B cell (primary cell): ENCODE measurements at regions of chr14 and their contacts with region 1.

Region 1: DNA sequence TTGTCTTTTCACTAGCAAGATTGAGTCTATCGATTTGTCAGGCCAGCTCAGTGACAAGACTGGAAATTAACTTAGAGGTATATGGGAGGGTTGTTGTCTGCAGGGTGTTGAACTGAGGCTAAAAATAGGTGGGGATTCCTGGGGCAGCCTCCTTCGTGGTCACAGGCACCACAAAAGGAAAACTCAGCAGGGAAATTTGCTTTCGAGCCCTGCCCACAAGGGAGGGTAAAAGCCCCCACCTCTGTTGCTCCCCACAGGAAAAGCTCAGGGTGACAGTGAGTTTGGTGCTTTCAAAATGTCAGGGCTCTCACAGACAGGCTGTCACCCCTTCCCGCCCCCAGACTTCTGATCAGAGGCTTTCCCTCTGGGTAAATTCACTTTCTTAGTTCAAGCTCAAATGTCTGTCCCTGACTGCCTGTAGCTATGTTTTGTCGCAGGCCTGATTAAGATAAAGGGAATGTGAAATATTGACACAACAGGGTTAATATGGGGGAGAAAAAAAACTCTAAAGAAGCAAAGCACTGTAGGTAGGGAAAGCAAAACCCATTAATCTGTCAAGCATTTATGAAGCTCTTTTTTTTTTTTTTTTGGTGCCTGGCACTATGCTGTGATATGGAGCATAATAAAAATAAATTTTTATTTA is 11.7 kb upstream of the NFKBIA start:
- DNase-seq: peak; percentile 39
- ATAC-seq: peak; percentile 32
- H3K4me3 ChIP-seq: no peak overlapping the region
- H3K4me3 Mint-ChIP-seq: peak overlapping the region; percentile 44
- H3K27ac ChIP-seq: no peak overlapping the region
- H3K27ac Mint-ChIP-seq: peak overlapping the region; percentile 15
- H3K4me1 ChIP-seq: peaks cover 8 to 26% of the 10 kb centered on the region in 2 donors
- H3K4me1 Mint-ChIP-seq: peaks cover 25% of the 10 kb centered on the region
- H3K27me3 ChIP-seq: no peaks in the 10 kb centered on the region
- H3K27me3 Mint-ChIP-seq: no peaks in the 10 kb centered on the region
- CTCF ChIP-seq: no peak

Region 2: GRCh38 chr14:34671716-34672115 is 744.5 kb before region 1 on chr14:
- CTCF ChIA-PET with region 1: interaction called, 8 read pairs
- POLR2A ChIA-PET with region 1: no interaction called
- intact Hi-C with region 1: loop called (anchors 1 kb)
- DNase-seq: no peak
- ATAC-seq: no peak
- H3K4me3 ChIP-seq: no peak overlapping the region
- H3K4me3 Mint-ChIP-seq: no peak overlapping the region
- H3K27ac ChIP-seq: no peak overlapping the region
- H3K27ac Mint-ChIP-seq: no peak overlapping the region
- H3K4me1 ChIP-seq: no peaks in the 10 kb centered on the region
- H3K4me1 Mint-ChIP-seq: no peaks in the 10 kb centered on the region
- H3K27me3 ChIP-seq: no peaks in the 10 kb centered on the region
- H3K27me3 Mint-ChIP-seq: no peaks in the 10 kb centered on the region
- CTCF ChIP-seq: no peak

Region 3: DNA sequence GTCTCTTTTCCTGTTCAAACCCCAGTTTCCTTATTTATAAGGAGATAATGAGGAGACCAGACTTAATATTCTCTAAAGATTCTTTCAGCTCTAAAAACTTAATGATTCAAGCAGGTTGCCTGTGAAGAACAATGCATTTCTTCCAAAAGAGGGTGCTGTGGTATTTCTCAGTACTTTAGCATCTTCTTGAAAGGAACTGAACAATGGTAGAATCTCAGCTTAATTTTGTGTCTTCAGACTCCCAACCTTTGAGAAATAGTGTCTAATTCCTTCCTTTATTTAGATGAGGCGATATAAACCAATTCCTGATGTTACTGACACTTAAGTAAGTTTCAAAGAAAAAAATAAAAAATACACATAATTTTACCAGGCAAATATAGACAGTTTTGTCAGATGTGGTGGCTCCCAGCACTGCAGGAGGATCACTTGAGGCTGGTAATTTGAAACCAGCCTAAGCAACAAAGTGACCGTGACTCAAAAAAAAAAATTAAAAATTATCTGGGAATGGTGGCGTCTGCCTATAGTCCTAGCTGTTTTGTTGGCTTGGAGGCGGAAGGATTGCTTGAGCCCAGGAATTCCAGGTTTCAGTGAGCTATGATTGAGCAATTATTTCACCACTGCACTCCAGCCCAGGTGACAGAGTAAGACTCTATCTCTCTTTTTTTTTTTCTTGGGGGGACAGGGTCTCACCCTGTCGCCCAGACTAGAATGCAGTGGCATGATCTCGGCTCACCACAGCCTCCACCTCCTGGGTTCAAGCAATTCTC is 200.9 kb before region 1 on chr14:
- CTCF ChIA-PET with region 1: interaction called, 35 read pairs
- POLR2A ChIA-PET with region 1: no interaction called
- intact Hi-C with region 1: no loop called
- DNase-seq: peak; percentile 30
- ATAC-seq: no peak
- H3K4me3 ChIP-seq: no peak overlapping the region
- H3K4me3 Mint-ChIP-seq: no peak overlapping the region
- H3K27ac ChIP-seq: no peak overlapping the region
- H3K27ac Mint-ChIP-seq: no peak overlapping the region
- H3K4me1 ChIP-seq: no peaks in the 10 kb centered on the region
- H3K4me1 Mint-ChIP-seq: no peaks in the 10 kb centered on the region
- H3K27me3 ChIP-seq: no peaks in the 10 kb centered on the region
- H3K27me3 Mint-ChIP-seq: no peaks in the 10 kb centered on the region
- CTCF ChIP-seq: peak; percentile 12

Region 4: GRCh38 chr14:35261774-35262173 is 154.5 kb before region 1 on chr14:
- CTCF ChIA-PET with region 1: interaction called, 25 read pairs
- POLR2A ChIA-PET with region 1: no interaction called
- intact Hi-C with region 1: no loop called
- DNase-seq: peak; percentile 20
- ATAC-seq: peak; percentile 39
- H3K4me3 ChIP-seq: no peak overlapping the region
- H3K4me3 Mint-ChIP-seq: no peak overlapping the region
- H3K27ac ChIP-seq: no peak overlapping the region
- H3K27ac Mint-ChIP-seq: no peak overlapping the region
- H3K4me1 ChIP-seq: no peaks in the 10 kb centered on the region
- H3K4me1 Mint-ChIP-seq: no peaks in the 10 kb centered on the region
- H3K27me3 ChIP-seq: no peaks in the 10 kb centered on the region
- H3K27me3 Mint-ChIP-seq: no peaks in the 10 kb centered on the region
- CTCF ChIP-seq: peak; percentile 14

Region 5: DNA sequence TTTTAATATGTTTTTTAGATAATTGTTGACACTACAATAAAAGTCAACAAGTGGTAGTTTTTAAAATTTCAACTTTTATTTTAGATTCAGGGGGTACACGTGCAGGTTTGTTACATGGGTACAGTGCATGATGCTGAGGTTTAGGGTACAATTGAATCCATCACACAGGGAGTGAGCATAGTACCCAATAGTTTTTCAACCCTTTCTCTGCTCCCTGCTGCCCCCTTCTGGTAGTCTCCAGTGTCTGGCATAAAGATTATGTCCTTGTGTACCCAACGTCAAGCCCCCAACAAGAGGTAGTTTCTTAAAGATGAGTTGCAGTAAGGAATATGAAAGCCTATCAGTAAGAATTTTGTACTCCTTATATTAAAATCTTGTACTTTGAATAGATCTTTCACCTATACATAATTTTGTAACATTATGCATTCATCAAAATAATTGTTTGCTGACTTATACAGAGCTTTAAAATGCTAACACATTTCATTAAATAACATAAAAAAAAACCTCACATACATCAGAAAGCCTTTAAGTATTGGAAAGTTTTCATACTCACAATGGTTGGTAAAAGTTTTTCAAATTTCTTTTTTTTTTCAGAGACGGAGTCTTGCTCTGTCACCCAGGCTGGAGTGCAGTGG is 398.3 kb after region 1 on chr14:
- CTCF ChIA-PET with region 1: interaction called, 3 read pairs
- POLR2A ChIA-PET with region 1: no interaction called
- intact Hi-C with region 1: loop called (anchors 5 kb)
- DNase-seq: peak; percentile 76
- ATAC-seq: peak; percentile 95
- H3K4me3 ChIP-seq: no peak overlapping the region
- H3K4me3 Mint-ChIP-seq: no peak overlapping the region
- H3K27ac ChIP-seq: no peak overlapping the region
- H3K27ac Mint-ChIP-seq: no peak overlapping the region
- H3K4me1 ChIP-seq: no peaks in the 10 kb centered on the region
- H3K4me1 Mint-ChIP-seq: peaks cover 2% of the 10 kb centered on the region
- H3K27me3 ChIP-seq: no peaks in the 10 kb centered on the region
- H3K27me3 Mint-ChIP-seq: no peaks in the 10 kb centered on the region
- CTCF ChIP-seq: peak; percentile 82

Region 6: DNA sequence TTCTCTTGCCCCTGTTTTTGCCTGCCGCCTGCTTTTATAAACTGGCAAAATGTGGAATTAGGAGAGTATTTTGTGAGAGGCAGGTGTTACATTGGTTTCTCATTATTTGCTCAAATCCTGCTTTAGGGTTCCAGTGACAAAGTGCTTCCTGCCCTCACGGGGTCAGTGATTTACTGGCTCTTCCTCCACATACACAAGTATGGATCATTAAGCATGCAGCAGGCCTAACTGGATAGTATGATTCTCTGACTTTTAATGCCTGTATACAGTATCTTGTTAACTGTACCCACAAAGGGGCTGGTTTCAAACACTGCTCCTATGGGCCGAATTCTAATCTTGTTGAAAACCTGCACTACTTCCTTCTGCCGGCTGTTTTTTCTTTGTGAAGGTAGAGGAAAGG is 697.1 kb after region 1 on chr14:
- CTCF ChIA-PET with region 1: no interaction called
- POLR2A ChIA-PET with region 1: no interaction called
- intact Hi-C with region 1: no loop called
- DNase-seq: no peak
- ATAC-seq: no peak
- H3K4me3 ChIP-seq: no peak overlapping the region
- H3K4me3 Mint-ChIP-seq: no peak overlapping the region
- H3K27ac ChIP-seq: no peak overlapping the region
- H3K27ac Mint-ChIP-seq: no peak overlapping the region
- H3K4me1 ChIP-seq: no peaks in the 10 kb centered on the region
- H3K4me1 Mint-ChIP-seq: no peaks in the 10 kb centered on the region
- H3K27me3 ChIP-seq: no peaks in the 10 kb centered on the region
- H3K27me3 Mint-ChIP-seq: no peaks in the 10 kb centered on the region
- CTCF ChIP-seq: no peak